Tibial artery (tissue), 4 donors: ENCODE measurements at regions of chr16 and their contacts with region 1.

Region 1: GRCh38 chr16:85270374-85270773 is 158.1 kb upstream of the CIBAR2 start:
- DNase-seq: no peak
- H3K4me3 ChIP-seq: no peak overlapping the region
- H3K27ac ChIP-seq: no peak overlapping the region
- H3K4me1 ChIP-seq: no peaks in the 10 kb centered on the region
- H3K27me3 ChIP-seq: peaks cover 0 to 6% of the 10 kb centered on the region in 2 donors
- CTCF ChIP-seq: no peak

Region 2: DNA sequence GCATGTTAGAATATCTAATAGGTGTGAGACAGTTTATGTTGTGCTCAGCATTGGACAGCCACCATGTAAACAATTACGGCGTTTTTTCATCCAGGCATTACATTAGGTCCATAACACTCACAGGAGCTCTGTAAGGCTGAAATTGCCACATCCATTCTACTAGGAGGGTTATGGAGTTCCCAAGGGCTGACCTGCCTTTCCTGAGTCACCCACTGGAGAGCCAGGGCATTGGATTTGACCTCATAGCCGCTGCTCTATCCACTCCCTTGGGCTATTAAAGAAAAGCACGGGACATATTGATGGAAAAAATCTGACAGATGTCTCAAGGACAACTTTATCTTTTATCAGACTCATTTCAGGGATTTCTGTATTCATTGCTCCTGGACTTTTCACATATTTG is 1768.9 kb before region 1 on chr16:
- intact Hi-C with region 1: no loop called
- DNase-seq: no peak
- H3K4me3 ChIP-seq: no peak overlapping the region
- H3K27ac ChIP-seq: no peak overlapping the region
- H3K4me1 ChIP-seq: no peaks in the 10 kb centered on the region
- H3K27me3 ChIP-seq: no peaks in the 10 kb centered on the region
- CTCF ChIP-seq: no peak

Region 3: DNA sequence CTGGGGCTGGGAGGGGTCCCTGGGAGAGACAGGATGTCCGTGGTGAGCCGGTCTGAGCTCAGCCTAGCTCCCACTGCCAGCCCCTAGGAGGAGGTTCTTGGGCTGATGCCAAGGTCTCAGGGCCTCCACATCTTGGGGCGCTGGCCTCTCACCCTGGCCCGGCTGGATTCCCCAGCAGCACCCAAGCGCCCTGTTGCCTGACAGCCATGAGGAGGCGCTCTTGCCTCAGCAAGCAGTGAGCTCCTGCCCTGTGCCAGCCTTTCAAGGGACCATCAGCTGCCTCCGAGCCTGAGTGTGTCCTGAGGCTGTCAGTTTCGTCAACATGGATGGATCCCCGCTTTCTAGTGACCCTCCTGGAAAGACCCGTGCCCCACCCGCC is 76.8 kb after region 1 on chr16:
- intact Hi-C with region 1: no loop called
- DNase-seq: no peak
- H3K4me3 ChIP-seq: no peak overlapping the region
- H3K27ac ChIP-seq: no peak overlapping the region
- H3K4me1 ChIP-seq: peaks cover 0 to 35% (median 18%) of the 10 kb centered on the region in 4 donors
- H3K27me3 ChIP-seq: peaks cover 0 to 9% of the 10 kb centered on the region in 2 donors
- CTCF ChIP-seq: peak in 1 of 2 experiments; percentile 11

Region 4: GRCh38 chr16:85717393-85718121 is 447.2 kb after region 1 on chr16:
- intact Hi-C with region 1: loop called (anchors 5 kb)
- DNase-seq: peak in 1 of 2 donors; percentile 71
- H3K4me3 ChIP-seq: no peak overlapping the region
- H3K27ac ChIP-seq: no peak overlapping the region
- H3K4me1 ChIP-seq: peaks cover 0 to 13% (median 0%) of the 10 kb centered on the region in 4 donors
- H3K27me3 ChIP-seq: peaks cover 0 to 63% of the 10 kb centered on the region in 2 donors
- CTCF ChIP-seq: peak; percentile 68 to 70